ENCODE measurements at regions of chr14 and their contacts with region 1.

Region 1: DNA sequence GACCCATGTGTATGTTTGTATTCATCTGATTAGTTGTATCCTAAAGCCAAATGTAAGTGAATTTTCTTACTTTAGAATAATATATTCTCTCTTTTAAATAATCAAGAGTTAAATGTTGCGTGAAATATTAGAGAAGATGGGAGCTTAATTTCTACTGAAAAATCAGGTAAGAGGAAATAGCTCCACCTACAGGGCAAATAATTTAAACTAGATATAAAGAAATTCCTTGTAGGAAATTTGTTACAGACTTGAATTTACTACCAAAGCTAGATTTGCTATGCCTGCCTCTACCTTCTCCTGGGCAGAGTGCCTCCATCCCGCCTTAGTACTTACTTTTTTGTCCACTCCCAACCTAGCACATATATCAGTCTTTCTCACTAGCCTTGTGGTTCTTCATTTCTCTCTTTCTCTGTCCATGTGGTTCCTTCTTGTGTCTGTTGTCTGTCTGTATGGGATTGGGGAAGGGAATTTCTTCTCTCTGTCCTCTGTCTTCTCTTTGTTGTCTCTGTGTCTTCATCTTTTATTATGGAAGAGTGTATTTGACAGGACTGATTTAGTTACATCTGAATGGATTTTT is 44.7 kb downstream of the PALS1 start:
- H3K4me3 ChIP-seq: no peak overlapping the region
- H3K27ac ChIP-seq: no peak overlapping the region
- H3K4me1 ChIP-seq: no peaks in the 10 kb centered on the region
- CTCF ChIP-seq: no peak

Region 2: DNA sequence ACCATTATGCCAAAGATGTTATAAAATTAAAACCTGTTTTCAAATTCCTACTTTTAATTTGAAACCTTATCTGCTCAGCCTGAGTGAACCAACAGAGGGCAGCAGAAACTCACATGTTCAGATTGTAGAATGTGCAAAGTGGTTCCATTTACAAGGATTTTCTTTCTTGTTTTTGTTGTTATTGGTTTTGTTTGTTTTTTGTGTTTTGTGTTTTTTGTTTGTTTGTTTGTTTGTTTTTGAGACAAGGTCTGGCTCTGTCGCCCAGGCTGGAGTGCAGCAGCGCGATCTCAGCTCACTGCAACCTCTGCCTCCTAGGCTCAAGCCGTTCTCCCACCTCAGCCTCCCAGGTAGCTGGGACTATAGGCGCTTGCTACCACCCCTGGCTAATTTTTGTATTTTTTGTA is 119.5 kb before region 1 on chr14:
- CTCF ChIA-PET with region 1: interaction called, 45 read pairs
- POLR2A ChIA-PET with region 1: no interaction called
- H3K4me3 ChIP-seq: no peak overlapping the region
- H3K27ac ChIP-seq: no peak overlapping the region
- H3K4me1 ChIP-seq: peaks cover 9% of the 10 kb centered on the region; the same call in 1 of the 2 replicates
- CTCF ChIP-seq: peak; percentile 51; the same call in 1 of the 2 replicates

Region 3: GRCh38 chr14:67225523-67225922 is 60.4 kb before region 1 on chr14:
- CTCF ChIA-PET with region 1: interaction called, 11 read pairs
- POLR2A ChIA-PET with region 1: no interaction called
- H3K4me3 ChIP-seq: no peak overlapping the region
- H3K27ac ChIP-seq: no peak overlapping the region
- H3K4me1 ChIP-seq: peaks cover 13% of the 10 kb centered on the region; the same call in 1 of the 2 replicates
- CTCF ChIP-seq: no peak

Region 4: DNA sequence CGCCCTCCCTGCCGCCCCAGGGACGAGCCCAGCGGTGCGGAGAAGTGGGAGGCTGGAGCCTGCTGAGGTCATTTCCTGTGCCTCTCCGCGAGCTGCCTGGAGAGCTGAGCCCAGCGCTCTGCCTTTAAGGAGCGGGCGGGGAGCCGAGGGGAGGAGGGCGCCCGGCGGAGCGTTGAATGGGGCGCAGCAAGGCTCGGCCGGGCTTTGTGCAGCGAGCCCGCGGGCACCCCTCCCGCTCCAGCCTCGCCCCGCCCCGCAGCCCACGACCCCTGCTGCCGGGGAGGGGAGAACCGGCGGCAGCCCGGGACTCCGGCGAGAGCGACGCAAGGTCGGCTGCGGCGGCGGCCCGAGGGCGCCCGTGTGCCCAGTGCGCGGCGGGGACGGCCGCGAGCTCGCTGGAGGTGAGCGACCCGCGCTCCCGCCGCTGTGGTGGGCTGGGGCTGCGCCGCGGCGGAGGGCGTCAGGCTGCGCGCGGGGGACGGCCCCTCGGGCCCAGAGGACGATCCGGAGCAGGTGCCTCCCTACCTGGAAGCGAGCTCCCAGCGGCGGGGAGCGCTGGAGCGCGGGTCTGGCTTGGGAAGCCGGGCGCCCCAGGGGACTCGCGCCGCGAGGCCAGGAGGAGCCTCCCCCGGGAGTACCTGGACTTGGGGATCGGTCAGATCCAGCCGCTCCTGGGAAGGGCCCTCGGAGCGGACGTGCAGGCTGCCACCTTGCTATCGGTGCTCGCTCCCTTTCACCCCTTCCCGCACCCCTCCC is 247.2 kb after region 1 on chr14 and contains the start of gene PLEKHH1:
- CTCF ChIA-PET with region 1: no interaction called
- POLR2A ChIA-PET with region 1: no interaction called
- H3K4me3 ChIP-seq: peak within 1 kb of the TSS; percentile 71
- H3K27ac ChIP-seq: peak within 1 kb of the TSS; percentile 94
- H3K4me1 ChIP-seq: no peaks in the 10 kb centered on the region
- CTCF ChIP-seq: no peak

Measured in HEK293 (cell line).